CD8-positive, alpha-beta memory T cell (primary cell): ENCODE measurements at regions of chr14 and their contacts with region 1.

Region 1: GRCh38 chr14:64764641-64765520 is 60.7 kb downstream of the PLEKHG3 start:
- DNase-seq: peak; percentile 51 to 75 (median 61)
- H3K4me3 ChIP-seq: no peak overlapping the region
- H3K4me3 Mint-ChIP-seq: peak overlapping the region; percentile 11 to 85 (median 59)
- H3K27ac ChIP-seq: no peak overlapping the region
- H3K27ac Mint-ChIP-seq: peak overlapping the region in 6 of 8 donors; percentile 29 to 86 (median 71)
- H3K4me1 ChIP-seq: peaks cover 29% of the 10 kb centered on the region
- H3K4me1 Mint-ChIP-seq: peaks cover 42 to 48% (median 47%) of the 10 kb centered on the region in 3 donors
- H3K27me3 ChIP-seq: no peaks in the 10 kb centered on the region
- H3K27me3 Mint-ChIP-seq: peaks cover under 1 to 5% of the 10 kb centered on the region in 2 donors

Region 2: DNA sequence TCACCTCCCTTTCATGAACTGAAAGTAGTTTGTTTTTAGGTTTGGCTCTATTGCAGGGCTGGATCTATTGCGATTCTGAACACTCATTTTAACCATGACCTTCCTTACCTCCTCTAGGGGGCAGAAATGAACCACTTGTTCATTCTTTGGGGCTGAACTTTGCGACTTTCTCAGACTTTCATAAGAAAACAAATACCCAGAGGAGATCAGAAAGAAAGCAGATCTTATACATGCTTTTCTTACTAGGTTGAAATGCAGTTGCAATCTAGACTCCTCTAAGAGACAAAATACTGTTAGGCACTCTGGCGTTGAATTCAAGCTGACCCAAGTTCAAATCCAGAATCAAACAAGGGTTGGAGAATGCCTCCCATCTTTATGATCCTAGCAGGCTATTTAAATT is 93.3 kb before region 1 on chr14:
- CTCF ChIA-PET with region 1: interaction called, 72 read pairs
- POLR2A ChIA-PET with region 1: interaction called, 3 read pairs
- DNase-seq: peak in 2 of 5 donors; percentile 21 to 58
- H3K4me3 ChIP-seq: no peak overlapping the region
- H3K4me3 Mint-ChIP-seq: no peak overlapping the region
- H3K27ac ChIP-seq: no peak overlapping the region
- H3K27ac Mint-ChIP-seq: peak overlapping the region in 4 of 8 donors; percentile 9 to 54 (median 38)
- H3K4me1 ChIP-seq: peaks cover 14% of the 10 kb centered on the region
- H3K4me1 Mint-ChIP-seq: peaks cover 22 to 39% (median 33%) of the 10 kb centered on the region in 3 donors
- H3K27me3 ChIP-seq: no peaks in the 10 kb centered on the region
- H3K27me3 Mint-ChIP-seq: peaks cover 0 to 3% of the 10 kb centered on the region in 2 donors

Region 3: GRCh38 chr14:64736271-64737122 is 28.4 kb before region 1 on chr14:
- CTCF ChIA-PET with region 1: no interaction called
- POLR2A ChIA-PET with region 1: no interaction called
- DNase-seq: peak in 1 of 5 donors; percentile 31
- H3K4me3 ChIP-seq: no peak overlapping the region
- H3K4me3 Mint-ChIP-seq: no peak overlapping the region
- H3K27ac ChIP-seq: no peak overlapping the region
- H3K27ac Mint-ChIP-seq: peak overlapping the region in 4 of 8 donors; percentile 38 to 85 (median 75)
- H3K4me1 ChIP-seq: peaks cover 8% of the 10 kb centered on the region
- H3K4me1 Mint-ChIP-seq: peaks cover 24 to 30% (median 28%) of the 10 kb centered on the region in 3 donors
- H3K27me3 ChIP-seq: no peaks in the 10 kb centered on the region
- H3K27me3 Mint-ChIP-seq: peaks cover 0 to 2% of the 10 kb centered on the region in 2 donors

Region 4: DNA sequence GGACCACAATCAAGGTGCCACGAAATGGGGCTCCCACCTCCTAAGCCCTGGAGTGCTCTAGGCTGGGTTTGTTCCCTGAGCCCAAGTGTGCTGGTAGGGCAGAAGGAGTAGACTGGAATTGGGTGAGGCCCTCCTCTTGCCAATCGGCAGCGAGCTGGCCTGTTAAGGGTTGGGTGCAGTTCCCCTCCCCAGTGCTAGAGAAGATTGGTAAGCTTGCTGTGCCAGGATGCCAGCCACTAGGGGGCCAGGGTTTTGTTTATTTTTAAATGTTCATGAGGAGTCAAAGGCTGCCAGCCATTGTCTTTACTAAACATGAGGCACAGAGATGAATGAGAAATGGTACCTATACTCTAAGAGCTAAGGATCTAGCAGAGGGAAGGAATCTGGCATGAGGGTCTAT is 35.1 kb after region 1 on chr14:
- CTCF ChIA-PET with region 1: no interaction called
- POLR2A ChIA-PET with region 1: no interaction called
- DNase-seq: no peak
- H3K4me3 ChIP-seq: no peak overlapping the region
- H3K4me3 Mint-ChIP-seq: no peak overlapping the region
- H3K27ac ChIP-seq: no peak overlapping the region
- H3K27ac Mint-ChIP-seq: peak overlapping the region in 2 of 8 donors; percentile 61 to 66
- H3K4me1 ChIP-seq: no peaks in the 10 kb centered on the region
- H3K4me1 Mint-ChIP-seq: no peaks in the 10 kb centered on the region
- H3K27me3 ChIP-seq: no peaks in the 10 kb centered on the region
- H3K27me3 Mint-ChIP-seq: peaks cover 3 to 18% of the 10 kb centered on the region in 2 donors